OCI-LY7 (cell line): ENCODE measurements at regions of chr2 and their contacts with region 1.

Region 1: DNA sequence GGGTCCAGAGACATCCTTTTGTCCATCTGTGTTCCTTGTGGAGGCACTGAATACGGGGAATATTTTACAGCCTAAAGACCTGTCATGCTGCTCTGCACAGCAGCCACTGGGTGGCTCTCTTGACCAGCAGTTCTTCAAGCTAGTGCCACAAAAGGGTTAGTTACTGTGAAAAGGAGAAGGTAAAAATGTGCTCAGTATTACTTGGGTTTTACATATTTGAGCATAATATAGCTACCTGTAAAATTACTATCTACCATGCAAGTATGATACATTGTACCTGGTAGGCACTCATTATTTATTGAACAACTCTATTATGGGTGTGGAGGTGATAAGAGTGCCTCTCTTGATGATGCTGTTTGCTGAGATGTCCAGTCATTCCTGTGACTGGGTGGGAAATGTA is 23.6 kb downstream of the FZD5 start:
- DNase-seq: peak; percentile 75
- H3K4me3 ChIP-seq: no peak overlapping the region
- H3K27ac ChIP-seq: no peak overlapping the region
- H3K4me1 ChIP-seq: no peaks in the 10 kb centered on the region
- CTCF ChIP-seq: peak; percentile 98

Region 2: DNA sequence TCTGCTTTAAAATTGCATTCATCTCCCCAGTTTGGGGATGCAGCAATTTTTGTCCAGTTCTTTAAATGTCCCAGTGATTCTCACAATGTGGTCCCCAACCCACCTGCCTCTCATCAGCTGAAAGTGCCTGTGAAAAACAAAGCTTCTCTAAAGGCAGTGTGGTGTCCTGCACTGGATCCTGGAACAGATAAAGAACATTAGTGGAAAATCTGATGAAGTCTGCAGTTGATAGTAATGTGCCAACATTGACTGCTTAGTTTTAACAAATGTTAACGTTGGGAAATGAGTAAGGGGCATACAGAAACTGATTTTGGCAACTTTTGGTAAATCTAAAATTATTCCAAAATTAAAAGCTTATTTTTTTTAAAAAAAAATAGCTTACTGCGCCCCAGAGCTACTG is 14.3 kb after region 1 on chr2:
- CTCF ChIA-PET with region 1: no interaction called
- POLR2A ChIA-PET with region 1: interaction called, 10 read pairs
- intact Hi-C with region 1: no loop called
- DNase-seq: no peak
- H3K4me3 ChIP-seq: no peak overlapping the region
- H3K27ac ChIP-seq: no peak overlapping the region
- H3K4me1 ChIP-seq: peaks cover 6% of the 10 kb centered on the region
- CTCF ChIP-seq: no peak

Region 3: DNA sequence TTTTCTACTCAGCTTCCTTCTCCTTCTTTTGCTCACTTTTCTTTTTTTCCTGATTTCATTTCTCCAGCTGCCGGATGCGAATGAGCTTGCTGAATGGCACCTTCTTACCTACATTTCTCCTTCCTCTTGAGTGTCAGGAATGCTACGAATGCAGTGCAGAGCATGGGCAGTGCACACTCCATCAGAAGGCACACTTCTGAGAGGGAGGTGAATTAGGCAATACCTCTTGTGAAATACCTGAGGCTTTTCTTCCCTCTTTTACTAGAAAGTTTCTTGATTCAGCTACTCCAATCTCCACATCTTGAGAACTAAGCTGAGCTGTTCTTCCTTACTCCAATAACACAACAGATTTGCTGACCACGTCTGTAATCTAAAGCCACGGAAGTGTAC is 228.1 kb after region 1 on chr2:
- CTCF ChIA-PET with region 1: no interaction called
- POLR2A ChIA-PET with region 1: no interaction called
- intact Hi-C with region 1: loop called (anchors 1 kb)
- DNase-seq: no peak
- H3K4me3 ChIP-seq: no peak overlapping the region
- H3K27ac ChIP-seq: no peak overlapping the region
- H3K4me1 ChIP-seq: no peaks in the 10 kb centered on the region
- CTCF ChIP-seq: no peak

Region 4: GRCh38 chr2:208040199-208041171 is 294.4 kb after region 1 on chr2:
- CTCF ChIA-PET with region 1: interaction called, 8 read pairs
- POLR2A ChIA-PET with region 1: interaction called, 3 read pairs
- intact Hi-C with region 1: loop called (anchors 1 kb)
- DNase-seq: peak; percentile 62
- H3K4me3 ChIP-seq: no peak overlapping the region
- H3K27ac ChIP-seq: no peak overlapping the region
- H3K4me1 ChIP-seq: no peaks in the 10 kb centered on the region
- CTCF ChIP-seq: peak; percentile 81

Region 5: GRCh38 chr2:208072250-208072892 is 326.2 kb after region 1 on chr2:
- CTCF ChIA-PET with region 1: interaction called, 3 read pairs
- POLR2A ChIA-PET with region 1: no interaction called
- intact Hi-C with region 1: loop called (anchors 1 kb)
- DNase-seq: peak; percentile 58
- H3K4me3 ChIP-seq: no peak overlapping the region
- H3K27ac ChIP-seq: no peak overlapping the region
- H3K4me1 ChIP-seq: no peaks in the 10 kb centered on the region
- CTCF ChIP-seq: peak; percentile 87